ENCODE measurements at regions of chr10 and their contacts with region 1.

Region 1: DNA sequence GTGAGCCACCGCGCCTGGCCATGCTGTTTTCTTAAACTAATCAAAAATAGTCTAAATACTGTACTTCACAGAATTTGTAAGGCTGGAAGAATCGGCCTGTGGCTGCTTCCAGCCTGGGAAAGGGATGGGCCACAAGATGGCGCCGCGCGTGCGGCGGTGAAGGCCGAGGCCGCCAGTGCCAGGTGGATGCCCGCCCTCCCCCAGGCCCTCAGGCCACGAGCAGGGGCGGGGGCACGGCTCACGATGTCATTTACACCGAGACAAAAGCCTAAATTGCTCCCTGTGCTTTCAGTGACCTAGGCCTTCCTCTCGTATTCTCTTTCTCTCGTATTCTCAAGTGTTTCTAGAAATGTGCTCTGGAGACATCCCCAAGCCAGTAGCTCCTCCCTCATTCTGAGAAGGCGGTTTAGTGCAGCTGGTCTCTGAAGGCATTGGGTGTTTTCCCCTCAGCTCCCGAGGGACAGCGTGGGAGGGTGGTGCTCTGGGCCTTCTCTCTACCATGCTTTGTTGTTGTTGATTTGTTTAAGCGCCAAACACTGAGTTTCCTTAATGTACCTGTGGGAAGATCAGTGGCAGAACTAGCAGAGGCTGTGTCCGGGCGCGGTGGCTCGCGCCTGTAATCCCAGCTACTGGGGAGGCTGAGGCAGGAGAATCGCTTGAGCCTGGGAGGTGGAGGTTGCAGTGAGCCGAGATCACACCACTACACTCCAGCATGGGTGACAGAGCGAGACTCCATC is 68.4 kb downstream of the CDC123 start:
- DNase-seq: peak; percentile 84
- H3K4me3 Mint-ChIP-seq: peak overlapping the region; percentile 52
- H3K27ac Mint-ChIP-seq: peak overlapping the region; percentile 3
- H3K4me1 Mint-ChIP-seq: peaks cover 14% of the 10 kb centered on the region
- H3K27me3 Mint-ChIP-seq: no peaks in the 10 kb centered on the region
- CTCF ChIP-seq: peak; percentile 63

Region 2: DNA sequence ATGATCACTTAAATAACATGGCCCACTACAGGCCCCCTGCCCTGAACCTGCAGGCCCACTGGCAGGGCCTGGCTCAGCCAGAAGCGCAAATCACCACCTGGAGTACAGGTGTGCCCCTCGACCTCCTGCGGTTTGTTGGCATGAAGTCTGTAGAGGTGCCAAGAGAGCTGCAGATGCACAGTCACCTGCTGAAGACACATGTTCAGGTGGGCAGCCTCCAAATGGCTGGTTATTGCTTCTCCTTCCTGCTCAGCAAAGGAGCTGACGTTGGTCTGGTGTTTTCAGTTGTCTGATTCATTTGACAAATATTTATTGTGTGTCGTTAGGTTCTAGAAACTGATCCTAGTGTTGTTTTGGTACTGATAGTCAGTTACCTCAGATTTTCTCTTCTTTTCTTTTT is 166.6 kb before region 1 on chr10:
- CTCF ChIA-PET with region 1: no interaction called
- intact Hi-C with region 1: no loop called
- DNase-seq: no peak
- H3K4me3 Mint-ChIP-seq: no peak overlapping the region
- H3K27ac Mint-ChIP-seq: no peak overlapping the region
- H3K4me1 Mint-ChIP-seq: no peaks in the 10 kb centered on the region
- H3K27me3 Mint-ChIP-seq: no peaks in the 10 kb centered on the region
- CTCF ChIP-seq: no peak

Region 3: DNA sequence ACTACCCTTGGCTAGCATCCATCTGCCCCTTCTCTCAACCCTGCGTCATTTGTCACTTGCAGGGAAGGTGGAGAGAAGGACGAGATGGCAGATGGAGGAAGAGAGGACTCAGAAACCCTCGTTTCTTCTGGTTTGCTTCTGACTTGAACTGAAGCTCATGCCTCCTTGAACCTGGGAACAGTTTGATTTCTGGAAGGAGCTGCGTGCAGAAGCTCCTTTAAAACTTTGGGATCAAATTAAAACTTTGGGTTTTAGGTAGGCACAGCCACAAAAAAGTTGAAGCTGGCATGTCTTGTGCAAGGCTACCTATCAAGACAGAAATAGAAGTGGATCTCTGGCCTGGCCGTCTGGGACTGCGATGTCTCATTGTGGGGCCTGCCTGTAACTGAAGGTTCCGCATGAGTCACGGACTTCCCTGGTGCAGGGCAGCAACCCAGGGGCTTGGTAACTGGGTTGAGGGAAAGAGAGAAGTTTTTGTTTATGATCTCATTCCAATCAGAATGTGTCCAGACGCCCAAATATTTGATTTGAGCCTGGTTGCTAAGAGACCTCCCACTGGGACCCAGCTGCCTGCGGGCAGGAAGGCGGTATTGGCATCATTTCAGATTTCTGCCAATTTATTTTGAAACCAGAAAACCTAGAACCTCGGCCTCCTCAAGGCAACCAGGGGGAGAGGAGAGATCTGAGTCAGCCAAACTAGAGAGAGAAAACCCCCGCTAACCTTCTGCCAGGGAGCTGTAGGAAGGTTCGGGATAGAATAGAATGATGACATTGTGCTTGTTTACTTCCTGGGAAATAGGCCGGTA is 69.2 kb after region 1 on chr10:
- CTCF ChIA-PET with region 1: no interaction called
- intact Hi-C with region 1: loop called (anchors 5 kb)
- DNase-seq: peak; percentile 77
- H3K4me3 Mint-ChIP-seq: peak overlapping the region; percentile 8
- H3K27ac Mint-ChIP-seq: peak overlapping the region; percentile 74
- H3K4me1 Mint-ChIP-seq: peaks cover 12% of the 10 kb centered on the region
- H3K27me3 Mint-ChIP-seq: no peaks in the 10 kb centered on the region
- CTCF ChIP-seq: no peak

Region 4: GRCh38 chr10:12405342-12406320 is 141.3 kb after region 1 on chr10:
- CTCF ChIA-PET with region 1: interaction called, 3 read pairs
- intact Hi-C with region 1: loop called (anchors 2 kb)
- DNase-seq: peak; percentile 6
- H3K4me3 Mint-ChIP-seq: peak overlapping the region; percentile 44
- H3K27ac Mint-ChIP-seq: peak overlapping the region; percentile 39
- H3K4me1 Mint-ChIP-seq: peaks cover 22% of the 10 kb centered on the region
- H3K27me3 Mint-ChIP-seq: peaks cover 66% of the 10 kb centered on the region
- CTCF ChIP-seq: no peak

Region 5: GRCh38 chr10:12549295-12549694 is 284.9 kb after region 1 on chr10:
- CTCF ChIA-PET with region 1: no interaction called
- intact Hi-C with region 1: loop called (anchors 2 kb)
- DNase-seq: peak; percentile 7
- H3K4me3 Mint-ChIP-seq: no peak overlapping the region
- H3K27ac Mint-ChIP-seq: no peak overlapping the region
- H3K4me1 Mint-ChIP-seq: no peaks in the 10 kb centered on the region
- H3K27me3 Mint-ChIP-seq: peaks cover 61% of the 10 kb centered on the region
- CTCF ChIP-seq: no peak

Region 6: DNA sequence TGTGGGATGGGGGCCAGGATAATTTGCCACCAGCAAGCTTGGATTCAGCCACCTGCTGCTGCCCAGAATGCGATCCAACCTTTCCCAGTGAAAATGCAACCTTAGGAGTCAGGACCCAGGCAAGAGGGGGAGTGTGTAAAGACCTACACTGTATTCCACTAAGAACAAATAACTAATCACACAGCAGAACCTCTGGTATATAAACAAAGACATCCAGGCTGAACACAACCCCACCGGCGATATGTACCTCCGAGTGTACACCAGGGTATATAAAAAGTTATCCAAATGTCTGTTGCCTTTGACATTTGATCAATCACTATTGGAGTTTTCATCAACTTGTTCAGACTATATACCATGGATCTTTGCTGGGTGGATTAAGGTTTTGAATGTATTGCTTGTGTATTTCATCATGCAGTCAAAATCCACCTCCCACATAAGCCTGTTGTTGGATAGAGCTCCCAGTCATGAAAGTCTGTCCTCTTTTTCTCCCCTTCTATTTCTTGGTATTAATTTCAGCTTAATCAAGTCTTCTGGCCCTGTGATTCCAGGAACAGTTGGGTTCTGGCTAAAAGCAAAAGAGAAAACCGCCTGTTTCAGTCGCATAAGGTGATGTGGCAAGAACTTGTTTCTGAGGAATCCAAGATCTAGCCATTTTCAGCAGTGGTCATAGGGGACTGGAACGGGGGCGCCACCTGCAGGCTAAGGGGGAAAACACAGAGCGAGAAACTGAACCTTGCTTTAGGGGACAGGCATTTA is 446.4 kb after region 1 on chr10:
- CTCF ChIA-PET with region 1: interaction called, 4 read pairs
- intact Hi-C with region 1: loop called (anchors 1 kb)
- DNase-seq: peak; percentile 82
- H3K4me3 Mint-ChIP-seq: no peak overlapping the region
- H3K27ac Mint-ChIP-seq: peak overlapping the region; percentile 79
- H3K4me1 Mint-ChIP-seq: peaks cover 46% of the 10 kb centered on the region
- H3K27me3 Mint-ChIP-seq: no peaks in the 10 kb centered on the region
- CTCF ChIP-seq: peak; percentile 76